Ascending aorta (tissue), 2 donors: ENCODE measurements at regions of chr3 and their contacts with region 1.

Region 1: DNA sequence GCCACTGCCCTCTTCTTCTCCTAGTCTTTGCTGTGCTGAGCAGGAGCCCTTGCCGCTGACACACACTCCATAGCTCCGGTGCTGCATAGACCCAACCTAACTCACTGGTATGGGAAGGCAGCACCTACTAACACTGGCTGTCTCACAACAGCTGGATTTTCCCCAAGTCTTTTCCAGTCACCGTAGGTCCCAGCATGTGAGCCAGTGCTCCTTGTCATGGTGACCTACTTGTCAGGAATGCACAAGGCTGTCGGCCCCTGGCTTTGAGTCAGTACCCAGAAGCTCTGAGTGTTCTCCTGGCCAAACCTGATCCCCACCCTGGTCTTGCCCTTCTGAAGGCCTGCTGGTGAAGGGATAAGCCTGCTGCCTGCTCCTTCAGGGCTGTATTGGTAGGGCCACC is 25.7 kb downstream of the AMOTL2 start:
- DNase-seq: peak; percentile 79 to 95
- H3K4me3 ChIP-seq: no peak overlapping the region
- H3K27ac ChIP-seq: peak overlapping the region; percentile 67 to 72
- H3K4me1 ChIP-seq: peaks cover 6 to 23% of the 10 kb centered on the region in 2 donors
- H3K27me3 ChIP-seq: no peaks in the 10 kb centered on the region
- CTCF ChIP-seq: peak in 1 of 3 experiments; percentile 9

Region 2: GRCh38 chr3:134299185-134299887 is 49.2 kb before region 1 on chr3:
- intact Hi-C with region 1: no loop called
- DNase-seq: no peak
- H3K4me3 ChIP-seq: no peak overlapping the region
- H3K27ac ChIP-seq: no peak overlapping the region
- H3K4me1 ChIP-seq: no peaks in the 10 kb centered on the region
- H3K27me3 ChIP-seq: no peaks in the 10 kb centered on the region
- CTCF ChIP-seq: peak; percentile 25 to 55 (median 31)

Region 3: DNA sequence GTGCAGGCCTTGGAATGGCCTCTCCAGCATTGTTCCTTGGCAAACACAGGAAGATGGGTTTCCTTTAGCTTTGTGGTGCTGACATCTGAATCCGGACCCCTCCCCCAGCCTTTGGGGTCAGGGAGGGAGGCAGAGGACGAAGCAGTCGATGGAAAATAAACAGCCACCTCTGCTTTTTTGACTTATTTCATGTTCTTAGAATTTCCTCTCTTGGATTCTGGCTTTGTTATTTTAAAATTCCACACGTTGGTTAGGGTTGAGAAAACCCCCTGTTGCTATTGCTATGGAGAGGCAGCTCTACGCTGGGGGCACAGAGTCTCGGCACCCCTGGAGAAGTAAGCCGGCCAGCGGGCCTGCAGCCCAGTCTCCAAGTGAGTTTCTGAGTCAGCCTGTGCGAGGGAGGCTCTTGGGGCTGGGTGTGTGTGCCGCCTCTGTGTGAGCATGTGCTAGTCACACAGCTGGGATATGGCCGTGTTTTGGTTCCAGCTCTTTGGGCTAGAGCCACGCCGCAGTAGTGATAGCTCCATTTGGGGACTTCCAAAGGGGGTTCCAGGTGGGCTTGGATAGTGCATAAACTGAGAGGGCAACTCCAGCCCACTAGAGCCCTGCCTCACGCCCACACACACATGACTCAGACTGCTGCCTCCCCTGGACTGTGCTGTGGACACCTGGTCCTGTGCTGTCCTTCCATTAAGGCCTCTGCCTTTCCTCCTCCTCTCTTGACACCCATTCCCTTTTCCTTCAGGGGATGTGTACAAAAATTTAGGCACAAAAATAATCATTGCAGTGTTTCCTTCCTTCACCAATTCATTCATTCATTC is 33.0 kb before region 1 on chr3:
- intact Hi-C with region 1: loop called (anchors 2 kb)
- DNase-seq: peak; percentile 72 to 93
- H3K4me3 ChIP-seq: no peak overlapping the region
- H3K27ac ChIP-seq: peak overlapping the region; percentile 94 to 97
- H3K4me1 ChIP-seq: peaks cover 30 to 66% of the 10 kb centered on the region in 2 donors
- H3K27me3 ChIP-seq: no peaks in the 10 kb centered on the region
- CTCF ChIP-seq: no peak

Region 4: GRCh38 chr3:134336587-134336986 is 11.9 kb before region 1 on chr3:
- intact Hi-C with region 1: loop called (anchors 1 kb)
- DNase-seq: peak in 1 of 2 donors; percentile 85
- H3K4me3 ChIP-seq: no peak overlapping the region
- H3K27ac ChIP-seq: peak overlapping the region; percentile 87
- H3K4me1 ChIP-seq: peaks cover 24 to 60% of the 10 kb centered on the region in 2 donors
- H3K27me3 ChIP-seq: no peaks in the 10 kb centered on the region
- CTCF ChIP-seq: no peak

Region 5: DNA sequence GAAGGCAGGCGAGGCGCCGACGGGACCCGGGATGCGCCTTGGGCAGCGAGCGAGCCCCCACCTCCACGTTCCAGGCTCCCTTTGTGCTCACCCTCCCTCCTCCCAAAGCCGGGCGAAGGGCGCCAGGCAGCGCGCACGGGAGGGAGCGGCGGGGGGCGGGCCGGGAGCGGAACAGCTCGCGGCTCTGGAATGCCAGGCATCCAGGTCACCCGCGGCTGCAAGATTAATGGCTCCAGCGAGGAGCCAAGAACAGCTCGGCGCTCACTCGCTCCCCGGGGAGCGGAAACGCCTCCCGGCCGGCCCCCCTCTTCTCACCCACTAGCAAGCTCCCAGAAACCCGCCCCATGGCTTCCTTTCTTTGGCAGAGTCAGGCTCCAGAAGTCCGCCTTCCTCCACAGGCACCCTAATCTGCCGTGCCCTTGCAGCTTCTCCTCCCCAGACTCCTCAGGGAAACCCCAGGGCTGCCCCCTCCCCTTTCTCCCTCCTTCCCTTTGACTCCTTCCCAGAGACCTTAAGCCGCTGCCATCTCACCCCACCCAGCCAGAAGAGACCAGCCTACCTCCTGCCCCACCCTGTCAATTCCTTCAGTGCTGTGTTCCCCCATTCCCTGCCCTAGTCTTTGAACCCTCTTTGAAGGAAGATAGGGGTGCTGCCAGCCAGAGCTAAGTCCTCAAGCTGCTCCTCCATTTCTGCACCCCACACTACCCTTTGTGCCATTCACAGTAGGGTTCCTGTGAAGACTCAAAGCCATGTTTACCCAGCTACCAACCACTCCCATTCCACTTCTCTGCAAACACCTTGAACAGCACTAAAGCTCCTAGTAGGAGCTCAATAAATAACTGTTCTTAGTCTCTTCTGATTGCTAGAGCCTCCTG is 15.8 kb after region 1 on chr3:
- intact Hi-C with region 1: loop called (anchors 2 kb)
- DNase-seq: peak; percentile 75 to 98
- H3K4me3 ChIP-seq: peak overlapping the region; percentile 24 to 44
- H3K27ac ChIP-seq: peak overlapping the region; percentile 92 to 93
- H3K4me1 ChIP-seq: peaks cover 28 to 97% of the 10 kb centered on the region in 2 donors
- H3K27me3 ChIP-seq: no peaks in the 10 kb centered on the region
- CTCF ChIP-seq: no peak

Region 6: DNA sequence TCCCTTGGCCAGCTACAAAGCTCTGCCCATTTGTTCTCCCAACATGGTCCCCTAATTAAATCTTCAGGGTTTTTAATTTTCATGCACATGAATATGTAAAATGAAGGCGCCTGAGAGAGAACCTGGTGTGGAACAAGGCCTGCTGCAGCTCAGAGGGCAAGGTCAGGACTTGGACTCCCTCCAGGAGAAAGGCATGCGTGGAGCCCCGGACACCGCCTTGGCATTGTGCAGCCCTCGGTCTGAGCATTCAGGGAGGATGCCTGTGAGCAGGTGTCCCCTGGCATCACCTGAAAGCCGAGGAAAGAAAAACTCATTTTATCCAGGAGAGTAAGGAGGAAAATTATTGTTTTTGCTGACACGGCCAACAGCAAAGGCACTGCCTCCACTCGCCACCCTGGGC is 412.7 kb after region 1 on chr3:
- intact Hi-C with region 1: no loop called
- DNase-seq: no peak
- H3K4me3 ChIP-seq: no peak overlapping the region
- H3K27ac ChIP-seq: no peak overlapping the region
- H3K4me1 ChIP-seq: no peaks in the 10 kb centered on the region
- H3K27me3 ChIP-seq: no peaks in the 10 kb centered on the region
- CTCF ChIP-seq: no peak